ENCODE measurements at regions of chr5 and their contacts with region 1.

Region 1: GRCh38 chr5:159106569-159107282 is 7.0 kb upstream of the EBF1 start:
- DNase-seq: peak; percentile 88
- ATAC-seq: peak; percentile 87
- H3K4me3 Mint-ChIP-seq: peak overlapping the region; percentile 81
- H3K27ac Mint-ChIP-seq: no peak overlapping the region
- H3K4me1 Mint-ChIP-seq: peaks cover 27% of the 10 kb centered on the region
- H3K27me3 Mint-ChIP-seq: peaks cover 70% of the 10 kb centered on the region
- CTCF ChIP-seq: peak; percentile 88

Region 2: GRCh38 chr5:158174918-158175851 is 931.5 kb before region 1 on chr5:
- CTCF ChIA-PET with region 1: interaction called, 36 read pairs
- POLR2A ChIA-PET with region 1: no interaction called
- DNase-seq: peak; percentile 85
- ATAC-seq: peak; percentile 88
- H3K4me3 Mint-ChIP-seq: no peak overlapping the region
- H3K27ac Mint-ChIP-seq: no peak overlapping the region
- H3K4me1 Mint-ChIP-seq: peaks cover 14% of the 10 kb centered on the region
- H3K27me3 Mint-ChIP-seq: no peaks in the 10 kb centered on the region
- CTCF ChIP-seq: peak; percentile 72

Region 3: DNA sequence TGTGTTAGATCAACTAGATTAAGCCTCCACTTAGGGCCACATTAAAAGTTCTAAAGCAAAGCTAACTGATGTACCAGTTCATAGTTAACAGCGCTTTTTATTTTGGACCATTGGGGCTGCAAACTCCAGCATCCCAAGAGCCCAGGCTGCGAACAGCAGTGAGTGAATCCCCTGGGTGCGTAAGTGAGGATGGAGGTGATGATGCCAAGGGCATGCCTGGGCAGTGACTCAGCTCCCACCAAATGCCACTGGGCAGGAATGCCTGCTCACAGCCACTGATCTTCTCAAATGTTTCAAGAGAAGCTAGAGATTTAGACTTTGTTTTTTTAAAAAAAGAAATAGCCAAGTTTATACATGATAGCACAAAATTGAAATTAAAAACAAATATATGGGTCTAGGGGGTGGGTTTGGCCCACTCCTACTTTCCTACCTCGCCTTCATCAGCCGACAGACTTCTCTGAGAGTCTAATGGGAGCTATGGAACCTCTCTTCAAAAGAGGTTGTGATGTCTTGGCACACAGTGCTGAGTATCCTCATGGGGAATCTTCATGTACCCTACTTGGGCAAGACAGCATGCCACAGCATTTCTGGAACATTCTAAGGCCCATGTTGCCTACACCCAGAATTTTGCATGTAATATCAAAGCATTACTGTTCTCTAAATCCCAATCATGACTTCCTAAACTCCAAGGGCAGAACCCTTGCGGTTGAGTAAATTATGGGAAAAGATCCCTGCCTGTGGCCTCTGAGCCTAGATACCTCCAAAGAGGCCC is 405.1 kb before region 1 on chr5:
- CTCF ChIA-PET with region 1: interaction called, 25 read pairs
- POLR2A ChIA-PET with region 1: no interaction called
- DNase-seq: no peak
- ATAC-seq: no peak
- H3K4me3 Mint-ChIP-seq: no peak overlapping the region
- H3K27ac Mint-ChIP-seq: no peak overlapping the region
- H3K4me1 Mint-ChIP-seq: peaks cover 59% of the 10 kb centered on the region
- H3K27me3 Mint-ChIP-seq: peaks cover 3% of the 10 kb centered on the region; the same call in 1 of the 2 replicates
- CTCF ChIP-seq: no peak

Region 4: DNA sequence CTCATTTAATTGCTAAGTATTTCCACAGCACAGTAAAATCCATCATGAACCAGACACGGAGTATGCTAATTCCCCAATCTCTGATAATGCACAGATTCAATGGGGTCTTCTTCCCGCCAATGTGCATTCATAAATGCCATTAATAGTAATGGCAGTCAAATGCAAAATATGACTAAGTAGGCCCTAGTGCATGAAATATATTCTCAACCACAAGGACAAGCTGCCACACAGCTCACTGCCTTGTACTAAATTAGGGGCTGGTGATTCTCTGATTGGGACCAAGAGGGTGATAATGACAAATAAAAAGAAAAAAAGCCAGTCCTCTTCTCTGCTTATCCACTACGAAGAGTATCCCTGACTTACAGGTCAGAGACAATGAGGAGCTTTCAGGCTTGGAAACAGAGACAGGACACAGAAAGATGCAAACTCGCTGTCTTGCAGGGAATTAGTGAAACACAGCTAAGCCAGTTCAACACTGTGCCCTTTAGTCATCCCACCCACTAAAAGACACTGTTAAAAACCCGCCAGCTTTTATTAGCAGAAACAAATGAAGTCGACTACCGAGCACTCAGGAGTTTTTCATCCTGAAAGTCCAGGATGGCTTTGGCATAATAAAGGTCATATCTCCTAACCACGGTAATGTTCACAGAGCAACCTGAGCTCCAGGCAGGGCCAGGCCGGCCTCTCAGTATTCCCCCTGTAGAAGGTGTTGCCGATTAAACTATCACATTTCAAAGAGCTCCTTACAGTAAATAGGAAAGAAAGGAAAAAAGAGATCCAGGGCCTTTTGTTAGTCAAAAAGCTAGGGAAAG is 155.1 kb before region 1 on chr5:
- CTCF ChIA-PET with region 1: interaction called, 18 read pairs
- POLR2A ChIA-PET with region 1: no interaction called
- DNase-seq: no peak
- ATAC-seq: peak; percentile 94
- H3K4me3 Mint-ChIP-seq: peak overlapping the region; percentile 10
- H3K27ac Mint-ChIP-seq: no peak overlapping the region
- H3K4me1 Mint-ChIP-seq: peaks cover 33% of the 10 kb centered on the region
- H3K27me3 Mint-ChIP-seq: peaks cover 81% of the 10 kb centered on the region
- CTCF ChIP-seq: no peak

Region 5: DNA sequence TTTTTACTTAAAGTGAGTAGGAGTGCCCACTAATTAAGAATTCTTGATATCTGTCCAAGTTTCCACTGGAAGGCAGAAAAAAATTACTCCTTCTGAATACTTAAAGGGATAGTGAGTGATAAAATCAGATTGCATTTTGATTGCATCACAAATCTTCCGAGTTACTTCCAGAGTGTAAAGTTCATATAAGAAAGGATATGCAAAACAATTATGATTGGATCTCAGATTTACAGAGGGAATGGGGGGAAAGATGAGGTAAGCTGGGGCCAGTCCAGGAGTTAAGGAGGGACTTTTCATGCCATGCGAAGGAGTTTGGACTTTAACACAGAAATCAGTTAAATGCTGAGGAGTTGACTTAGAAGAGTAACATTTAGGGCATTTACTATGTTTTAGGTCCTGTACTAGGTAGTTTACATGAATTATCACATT is 111.9 kb after region 1 on chr5:
- CTCF ChIA-PET with region 1: no interaction called
- POLR2A ChIA-PET with region 1: no interaction called
- DNase-seq: no peak
- ATAC-seq: no peak
- H3K4me3 Mint-ChIP-seq: no peak overlapping the region
- H3K27ac Mint-ChIP-seq: no peak overlapping the region
- H3K4me1 Mint-ChIP-seq: no peaks in the 10 kb centered on the region
- H3K27me3 Mint-ChIP-seq: peaks cover 49% of the 10 kb centered on the region
- CTCF ChIP-seq: no peak